AG04449 (cell line): ENCODE measurements at regions of chr6 and their contacts with region 1.

Region 1: DNA sequence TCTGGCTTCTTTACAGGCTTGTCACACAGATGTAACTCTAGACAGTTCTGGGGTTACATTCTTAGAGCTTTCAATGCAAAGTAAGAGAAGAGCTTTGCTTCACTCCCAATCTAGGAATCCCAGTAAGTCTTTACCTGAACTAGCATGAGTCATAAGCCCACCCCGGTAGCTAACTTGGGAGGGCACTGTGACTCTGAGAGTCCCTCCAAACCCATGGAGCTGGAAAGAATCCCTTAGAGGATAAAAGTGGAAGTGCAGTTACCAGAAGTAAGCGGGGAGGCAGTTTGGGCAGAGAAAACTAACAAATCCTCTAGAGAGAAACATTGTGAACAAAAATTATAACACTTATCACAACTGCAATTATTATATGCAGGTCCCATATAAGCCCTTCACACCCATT is 84.0 kb upstream of the SMLR1 start:
- DNase-seq: no peak
- H3K4me3 ChIP-seq: no peak overlapping the region
- CTCF ChIP-seq: no peak

Region 2: DNA sequence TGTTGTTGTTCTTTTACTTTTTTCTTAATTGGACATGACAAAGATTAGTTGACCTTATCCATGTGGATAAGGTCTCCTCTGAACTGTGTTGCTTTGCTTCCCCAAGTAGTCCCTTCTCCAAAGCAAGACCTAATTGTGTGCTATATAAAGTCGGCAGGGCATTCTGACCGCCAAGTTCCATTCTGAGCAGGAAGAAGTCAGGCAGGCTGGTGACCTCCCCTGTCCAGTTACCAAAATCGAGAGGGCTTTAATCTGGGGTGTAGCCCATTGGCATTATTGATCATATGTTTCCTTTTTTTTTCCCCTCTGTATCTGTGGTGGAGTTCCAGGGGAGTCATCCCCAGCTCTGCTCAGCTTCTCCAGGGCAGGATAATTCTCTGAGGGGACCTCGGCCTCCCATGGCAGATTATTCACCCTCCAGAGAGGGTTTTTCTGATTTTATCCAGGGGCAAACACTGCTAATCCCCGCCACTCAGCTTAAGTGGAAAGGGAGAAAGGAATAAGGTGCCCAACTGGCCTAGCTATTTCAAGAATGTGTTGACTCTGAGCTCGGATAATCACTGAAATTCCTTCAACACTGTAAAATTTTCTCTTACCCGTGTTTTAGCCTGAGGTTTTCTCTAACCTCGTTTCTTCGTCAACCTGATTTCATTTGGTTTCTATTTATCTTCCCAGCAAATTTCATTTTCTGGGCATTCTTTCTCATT is 796.6 kb before region 1 on chr6:
- CTCF ChIA-PET with region 1: no interaction called
- POLR2A ChIA-PET with region 1: no interaction called
- DNase-seq: no peak
- H3K4me3 ChIP-seq: no peak overlapping the region
- CTCF ChIP-seq: no peak

Region 3: GRCh38 chr6:130754786-130755367 is 11.7 kb after region 1 on chr6:
- CTCF ChIA-PET with region 1: interaction called, 11 read pairs
- POLR2A ChIA-PET with region 1: no interaction called
- DNase-seq: no peak
- H3K4me3 ChIP-seq: no peak overlapping the region
- CTCF ChIP-seq: no peak

Region 4: GRCh38 chr6:130760006-130760405 is 16.8 kb after region 1 on chr6:
- CTCF ChIA-PET with region 1: interaction called, 11 read pairs
- POLR2A ChIA-PET with region 1: no interaction called
- DNase-seq: no peak
- H3K4me3 ChIP-seq: no peak overlapping the region
- CTCF ChIP-seq: peak; percentile 69